Activated T-helper 1 cell treated with anti-CD3 and anti-CD28 coated beads, Interleukin-12 subunit alpha, Interleukin-12 subunit beta, Interleukin-2, Interleukin-4 antibody, amounts not matched to agents 30 ng/mL and 10 ng/mL and 1 ng/mL, durations not matched to agents 14 hours and 24 hours and 36 hours (primary cell): ENCODE measurements at regions of chr3 and their contacts with region 1.

Region 1: GRCh38 chr3:179451265-179452175 is at the start of gene GNB4:
- DNase-seq: peak; percentile 58
- H3K4me3 Mint-ChIP-seq: peak within 1 kb of the TSS; percentile 89
- H3K27ac Mint-ChIP-seq: peak within 1 kb of the TSS; percentile 91
- H3K4me1 Mint-ChIP-seq: peaks cover 39% of the 10 kb centered on the region
- H3K27me3 Mint-ChIP-seq: peaks cover 51% of the 10 kb centered on the region
- total RNA-seq, gene GNB4: 13.9 and 15.4 TPM in 2 replicates

Region 2: DNA sequence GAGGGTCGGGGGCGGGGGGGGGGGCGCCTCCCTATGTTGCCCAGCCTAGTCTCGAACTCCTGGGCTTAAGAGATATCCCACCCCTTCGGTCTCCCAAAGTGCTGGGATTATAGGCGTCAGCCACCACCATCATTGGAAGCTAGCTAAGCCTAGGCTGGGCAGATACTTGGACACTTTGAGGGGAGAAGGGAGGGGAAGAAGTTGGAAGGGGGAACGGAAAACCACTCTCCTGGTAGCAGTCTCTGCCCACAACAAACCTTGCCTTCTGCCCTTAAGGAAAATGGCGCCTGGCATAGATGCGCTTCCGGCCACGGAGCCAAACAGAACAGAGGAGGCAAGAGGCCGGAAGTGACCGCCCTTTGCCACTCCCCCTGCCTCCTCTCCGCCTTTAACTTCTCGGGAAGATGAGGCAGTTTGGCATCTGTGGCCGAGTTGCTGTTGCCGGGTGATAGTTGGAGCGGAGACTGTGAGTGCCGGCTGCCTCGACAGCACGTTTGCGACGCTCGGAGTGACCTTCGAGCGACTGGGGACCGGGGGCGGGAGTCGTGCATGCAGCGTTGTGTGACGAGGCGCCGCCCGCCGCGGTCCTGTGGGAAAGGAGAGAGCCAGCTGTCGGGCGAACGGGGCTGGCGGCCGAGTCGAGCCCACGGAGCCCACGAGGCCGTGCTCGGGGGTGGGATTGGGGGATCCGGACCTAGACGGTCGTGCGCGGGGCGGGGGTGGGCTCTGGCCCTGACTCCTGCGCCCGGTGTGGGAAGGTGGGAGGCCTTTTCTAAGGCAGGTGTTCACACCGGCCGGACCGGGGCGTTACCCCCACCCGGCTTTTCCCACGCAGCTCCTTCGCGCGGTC is 104.0 kb before region 1 on chr3 and contains the start of gene MFN1:
- intact Hi-C with region 1: loop called (anchors 5 kb)
- DNase-seq: peak; percentile 87
- H3K4me3 Mint-ChIP-seq: peak within 1 kb of the TSS; percentile 98
- H3K27ac Mint-ChIP-seq: peak within 1 kb of the TSS; percentile 96
- H3K4me1 Mint-ChIP-seq: peaks cover 25% of the 10 kb centered on the region
- H3K27me3 Mint-ChIP-seq: no peaks in the 10 kb centered on the region
- total RNA-seq, gene MFN1: 29.5 and 37.7 TPM in 2 replicates

Region 3: DNA sequence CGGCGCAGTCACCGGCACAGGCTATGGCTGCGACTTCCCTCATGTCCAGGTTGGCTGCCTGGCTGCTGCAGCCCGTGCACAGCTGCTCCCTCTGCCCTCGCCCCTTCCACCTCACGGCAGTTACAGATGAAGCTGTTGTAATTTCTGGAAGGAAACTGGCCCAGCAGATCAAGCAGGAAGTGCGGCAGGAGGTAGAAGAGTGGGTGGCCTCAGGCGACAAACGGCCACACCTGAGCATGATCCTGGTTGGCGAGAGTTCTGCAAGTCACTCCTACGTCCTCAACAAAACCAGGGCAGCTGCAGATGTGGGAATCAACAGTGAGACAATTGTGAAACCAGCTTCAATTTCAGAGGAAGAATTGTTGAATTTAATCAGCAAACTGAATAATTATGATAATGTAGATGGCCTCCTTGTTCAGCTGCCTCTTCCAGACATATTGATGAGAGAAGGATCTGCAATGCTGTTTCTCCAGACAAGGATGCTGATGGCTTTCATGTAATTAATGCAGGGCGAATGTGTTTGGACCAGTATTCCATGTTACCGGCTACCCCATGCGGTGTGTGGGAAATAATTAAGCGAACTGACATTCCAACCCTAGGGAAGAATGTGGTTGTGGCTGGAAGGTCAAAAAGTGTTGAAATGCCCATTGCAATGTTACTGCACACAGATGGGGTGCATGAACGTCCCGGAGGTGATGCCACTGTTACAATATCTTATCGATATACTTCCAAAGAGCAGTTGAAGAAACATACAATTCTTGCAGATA is 13.0 kb after region 1 on chr3:
- intact Hi-C with region 1: loop called (anchors 2 kb)
- DNase-seq: no peak
- H3K4me3 Mint-ChIP-seq: no peak overlapping the region
- H3K27ac Mint-ChIP-seq: no peak overlapping the region
- H3K4me1 Mint-ChIP-seq: peaks cover 14% of the 10 kb centered on the region
- H3K27me3 Mint-ChIP-seq: no peaks in the 10 kb centered on the region

Region 4: GRCh38 chr3:179653096-179653797 is 201.7 kb after region 1 on chr3:
- intact Hi-C with region 1: loop called (anchors 5 kb)
- DNase-seq: peak; percentile 57
- H3K4me3 Mint-ChIP-seq: peak overlapping the region; percentile 93
- H3K27ac Mint-ChIP-seq: peak overlapping the region; percentile 87
- H3K4me1 Mint-ChIP-seq: peaks cover 27% of the 10 kb centered on the region
- H3K27me3 Mint-ChIP-seq: peaks cover 9% of the 10 kb centered on the region